ENCODE measurements at regions of chr2 and their contacts with region 1.

Region 1: DNA sequence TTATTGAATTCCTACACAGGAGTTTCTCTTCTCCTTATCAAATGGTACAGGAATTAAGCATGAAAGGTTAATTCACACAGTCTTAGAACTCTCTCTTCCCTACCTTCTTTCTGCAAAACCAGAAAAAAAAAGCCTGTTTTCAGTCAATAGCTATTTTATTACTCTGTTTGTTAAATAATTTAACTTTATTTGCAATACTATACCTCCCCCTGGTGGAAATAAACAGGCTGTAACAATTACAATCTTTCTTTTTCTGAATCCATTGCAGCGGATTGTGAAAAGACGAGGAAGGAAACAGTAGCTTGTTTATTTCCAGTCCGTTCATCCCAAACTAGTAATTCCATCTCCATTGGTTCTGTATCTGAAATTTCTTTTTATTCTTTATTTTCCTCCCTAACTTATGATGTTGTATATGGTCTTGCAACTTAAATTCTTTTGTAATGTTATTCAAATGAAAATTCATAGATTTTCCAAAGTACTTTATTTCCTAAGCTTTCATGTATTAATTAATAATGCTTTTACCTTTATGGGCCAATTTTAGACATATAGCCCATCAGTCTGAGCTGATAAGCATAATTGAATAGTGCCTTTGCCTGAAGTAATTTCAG is 165.2 kb downstream of the SH3BP4 start:
- DNase-seq: peak; percentile 32
- ATAC-seq: peak; percentile 63
- H3K4me3 ChIP-seq: no peak overlapping the region
- H3K27ac ChIP-seq: no peak overlapping the region
- H3K4me1 ChIP-seq: 0 out of 4 replicates have a peak, but pooled peaks cover 0 to 4% of the 10 kb centered on the region in 2 experiments
- H3K27me3 ChIP-seq: no peaks in the 10 kb centered on the region
- CTCF ChIP-seq: peak; percentile 35 to 82 (median 76); a peak in 5 of 6 replicates
- POLR2A ChIP-seq: no peak
- RAD21 ChIP-seq: peak; percentile 92

Region 2: DNA sequence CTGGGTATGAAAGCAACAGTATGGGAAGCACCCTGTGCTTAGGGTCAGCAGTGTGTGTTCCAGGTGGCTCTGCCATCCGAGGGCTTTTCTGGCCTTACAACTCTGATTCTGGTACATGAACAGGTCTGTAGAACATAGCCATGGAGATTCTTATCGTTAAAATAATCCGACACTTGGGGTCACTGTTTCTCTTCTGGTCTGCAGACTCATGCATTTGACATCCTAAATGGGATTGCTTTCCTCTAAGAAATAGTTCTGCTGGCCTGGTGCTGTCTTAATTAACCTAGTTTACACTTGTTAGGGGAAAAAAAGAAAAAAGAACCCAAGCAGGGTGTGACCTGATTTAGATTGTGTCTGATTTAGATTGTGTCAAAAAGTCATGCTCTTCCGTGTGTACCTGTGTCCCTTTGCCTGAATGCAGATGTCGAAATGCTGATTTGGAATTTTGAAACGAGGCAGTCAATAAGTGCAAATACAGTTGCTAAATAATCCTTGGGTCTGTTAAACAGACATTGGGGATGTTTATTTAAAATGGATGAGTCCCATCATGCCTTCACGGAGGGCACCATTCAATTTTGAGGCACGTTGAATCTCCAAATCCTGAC is 1140.2 kb before region 1 on chr2:
- CTCF ChIA-PET with region 1: interaction called, 6 read pairs
- POLR2A ChIA-PET with region 1: no interaction called
- RAD21 ChIA-PET with region 1: interaction called in 1 of 2 experiments, 3 read pairs
- intact Hi-C with region 1: loop called (anchors 2 kb)
- DNase-seq: peak; percentile 62
- ATAC-seq: peak; percentile 32; the same call in 1 of the 2 replicates
- H3K4me3 ChIP-seq: no peak overlapping the region
- H3K27ac ChIP-seq: no peak overlapping the region
- H3K4me1 ChIP-seq: peaks cover 31 to 64% of the 10 kb centered on the region in 2 experiments
- H3K27me3 ChIP-seq: no peaks in the 10 kb centered on the region
- CTCF ChIP-seq: peak; percentile 37 to 81 (median 65); a peak in 5 of 6 replicates
- POLR2A ChIP-seq: no peak
- RAD21 ChIP-seq: peak; percentile 97

Region 3: DNA sequence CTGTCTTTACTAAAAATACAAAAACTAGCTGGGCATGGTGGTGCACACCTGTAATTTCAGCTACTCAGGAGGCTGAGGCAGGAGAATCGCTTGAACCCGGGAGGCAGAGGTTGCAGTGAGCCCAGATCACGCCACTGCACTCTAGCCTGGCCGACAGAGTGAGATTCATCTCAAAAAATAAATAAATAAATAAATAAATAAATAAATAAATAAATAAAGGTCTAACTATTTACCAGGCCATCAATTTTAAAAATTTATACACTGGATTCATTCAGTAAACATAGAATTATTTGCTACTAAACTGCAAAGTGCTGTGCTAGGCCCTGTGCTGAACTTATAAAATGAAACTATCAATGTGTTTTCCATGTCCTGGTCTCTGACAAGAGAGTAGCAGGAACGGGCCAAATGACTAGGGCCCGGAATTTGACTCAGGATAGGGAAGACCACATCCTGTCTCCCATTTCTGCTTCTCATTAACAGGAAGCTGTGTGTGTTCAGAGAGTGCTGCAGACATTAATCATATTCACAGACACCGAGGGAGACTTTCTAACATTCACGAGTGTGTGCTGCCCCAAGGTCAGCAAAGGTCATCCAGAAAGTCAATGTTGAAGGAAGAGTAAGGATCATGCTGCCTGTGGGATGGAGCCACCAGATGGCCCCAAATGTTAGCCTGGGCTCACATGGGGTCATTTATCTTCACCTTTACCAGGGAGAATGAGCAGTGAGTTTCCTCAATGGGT is 970.7 kb before region 1 on chr2:
- CTCF ChIA-PET with region 1: no interaction called
- POLR2A ChIA-PET with region 1: no interaction called
- RAD21 ChIA-PET with region 1: no interaction called
- intact Hi-C with region 1: no loop called
- DNase-seq: no peak
- ATAC-seq: no peak
- H3K4me3 ChIP-seq: no peak overlapping the region
- H3K27ac ChIP-seq: no peak overlapping the region
- H3K4me1 ChIP-seq: peaks cover 14 to 24% of the 10 kb centered on the region in 2 experiments
- H3K27me3 ChIP-seq: no peaks in the 10 kb centered on the region
- CTCF ChIP-seq: 0 out of 6 replicates have a peak, but pooled peaks of 1 of the 3 experiments have one; percentile 19
- POLR2A ChIP-seq: no peak
- RAD21 ChIP-seq: peak; percentile 50

Region 4: DNA sequence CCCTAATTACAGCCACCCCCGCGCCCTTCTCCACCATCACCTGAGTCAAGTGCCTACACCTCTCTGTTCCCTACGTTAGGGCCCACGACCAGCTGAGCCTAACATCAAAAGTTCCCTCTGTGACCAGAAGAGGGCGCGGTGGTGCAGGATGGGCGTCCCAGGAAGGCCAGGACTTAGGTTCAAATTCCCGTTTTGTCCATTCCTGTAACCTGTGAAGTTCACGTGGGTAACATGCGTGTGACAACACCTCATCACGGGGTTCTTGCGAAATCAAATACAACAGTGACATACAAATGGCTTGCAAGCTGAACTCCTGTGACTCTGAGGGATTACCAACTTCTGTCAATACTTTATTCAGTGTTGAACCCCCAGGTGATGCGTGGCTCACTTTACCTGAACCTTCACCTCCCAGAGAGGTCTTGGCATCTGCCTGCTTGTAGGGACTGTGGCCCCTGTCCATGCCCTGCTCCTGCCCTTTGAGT is 828.0 kb before region 1 on chr2:
- CTCF ChIA-PET with region 1: interaction called, 6 read pairs
- POLR2A ChIA-PET with region 1: no interaction called
- RAD21 ChIA-PET with region 1: no interaction called
- intact Hi-C with region 1: loop called (anchors 10 kb)
- DNase-seq: peak; percentile 65
- ATAC-seq: peak; percentile 84
- H3K4me3 ChIP-seq: no peak overlapping the region
- H3K27ac ChIP-seq: no peak overlapping the region
- H3K4me1 ChIP-seq: peaks cover 19 to 55% of the 10 kb centered on the region in 2 experiments; a peak in 3 of 4 replicates
- H3K27me3 ChIP-seq: no peaks in the 10 kb centered on the region
- CTCF ChIP-seq: peak; percentile 67 to 89 (median 83); a peak in 5 of 6 replicates
- POLR2A ChIP-seq: no peak
- RAD21 ChIP-seq: peak; percentile 90

Region 5: DNA sequence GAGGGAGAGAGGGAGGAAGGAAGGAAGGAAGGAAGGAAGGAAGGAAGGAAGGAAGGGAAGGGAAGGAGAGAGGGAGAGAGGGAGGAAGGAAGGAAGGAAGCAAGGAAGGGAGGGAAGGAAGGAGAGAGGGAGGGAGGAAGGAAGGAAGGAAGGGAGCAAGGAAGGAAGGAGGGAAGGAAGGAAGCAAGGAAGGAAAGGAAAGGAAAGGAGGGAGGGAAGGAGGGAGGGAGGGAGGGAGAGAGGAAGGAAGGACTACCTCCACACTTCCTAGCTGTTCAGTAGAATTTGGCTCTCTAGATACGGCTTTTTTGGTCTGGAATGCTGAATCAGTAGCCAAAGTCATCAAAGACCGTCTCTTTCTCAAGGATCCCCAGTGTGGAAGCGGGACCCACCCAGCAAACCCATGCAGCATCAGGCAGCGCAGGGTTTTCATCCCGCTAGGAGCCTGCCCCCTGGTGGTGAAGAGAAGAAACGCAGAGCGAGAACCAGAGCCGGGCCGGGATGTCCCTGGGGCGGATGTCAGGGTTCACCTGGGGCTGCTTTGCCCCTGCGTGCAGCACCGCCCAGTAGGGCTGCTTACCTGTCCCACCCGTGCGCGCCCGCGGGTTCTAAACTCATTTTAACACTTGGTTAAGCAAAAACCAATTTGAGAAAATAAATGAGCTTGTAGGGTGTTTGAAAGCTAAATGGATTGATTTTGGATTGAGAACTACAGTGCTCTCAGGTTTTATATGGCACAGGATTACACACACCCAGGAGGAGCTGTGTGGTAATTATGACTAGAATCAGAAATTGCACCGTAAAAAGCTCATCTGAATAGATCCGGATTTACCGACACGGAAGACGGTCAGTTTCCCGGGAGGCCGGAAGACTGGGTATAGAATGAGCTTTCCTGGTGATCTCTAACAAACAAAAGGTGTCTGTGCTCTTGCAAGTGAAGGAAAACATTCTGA is 572.1 kb before region 1 on chr2:
- CTCF ChIA-PET with region 1: interaction called, 44 read pairs
- POLR2A ChIA-PET with region 1: interaction called, 6 read pairs
- RAD21 ChIA-PET with region 1: interaction called in 1 of 2 experiments, 6 read pairs
- intact Hi-C with region 1: loop called (anchors 1 kb)
- DNase-seq: peak; percentile 38
- ATAC-seq: peak; percentile 96
- H3K4me3 ChIP-seq: no peak overlapping the region
- H3K27ac ChIP-seq: no peak overlapping the region
- H3K4me1 ChIP-seq: peaks cover 3 to 8% of the 10 kb centered on the region in 2 experiments; a peak in 2 of 4 replicates
- H3K27me3 ChIP-seq: no peaks in the 10 kb centered on the region
- CTCF ChIP-seq: peak; percentile 84 to 85 (median 85)
- POLR2A ChIP-seq: no peak
- RAD21 ChIP-seq: peak; percentile 90

Region 6: GRCh38 chr2:234555720-234556119 is 561.3 kb before region 1 on chr2:
- CTCF ChIA-PET with region 1: interaction called, 17 read pairs
- POLR2A ChIA-PET with region 1: no interaction called
- RAD21 ChIA-PET with region 1: interaction called, 5 to 6 read pairs
- intact Hi-C with region 1: loop called (anchors 1 kb)
- DNase-seq: no peak
- ATAC-seq: no peak
- H3K4me3 ChIP-seq: no peak overlapping the region
- H3K27ac ChIP-seq: no peak overlapping the region
- H3K4me1 ChIP-seq: peaks cover 0 to 3% of the 10 kb centered on the region in 2 experiments; a peak in 1 of 4 replicates
- H3K27me3 ChIP-seq: no peaks in the 10 kb centered on the region
- CTCF ChIP-seq: no peak
- POLR2A ChIP-seq: no peak
- RAD21 ChIP-seq: no peak

Region 7: DNA sequence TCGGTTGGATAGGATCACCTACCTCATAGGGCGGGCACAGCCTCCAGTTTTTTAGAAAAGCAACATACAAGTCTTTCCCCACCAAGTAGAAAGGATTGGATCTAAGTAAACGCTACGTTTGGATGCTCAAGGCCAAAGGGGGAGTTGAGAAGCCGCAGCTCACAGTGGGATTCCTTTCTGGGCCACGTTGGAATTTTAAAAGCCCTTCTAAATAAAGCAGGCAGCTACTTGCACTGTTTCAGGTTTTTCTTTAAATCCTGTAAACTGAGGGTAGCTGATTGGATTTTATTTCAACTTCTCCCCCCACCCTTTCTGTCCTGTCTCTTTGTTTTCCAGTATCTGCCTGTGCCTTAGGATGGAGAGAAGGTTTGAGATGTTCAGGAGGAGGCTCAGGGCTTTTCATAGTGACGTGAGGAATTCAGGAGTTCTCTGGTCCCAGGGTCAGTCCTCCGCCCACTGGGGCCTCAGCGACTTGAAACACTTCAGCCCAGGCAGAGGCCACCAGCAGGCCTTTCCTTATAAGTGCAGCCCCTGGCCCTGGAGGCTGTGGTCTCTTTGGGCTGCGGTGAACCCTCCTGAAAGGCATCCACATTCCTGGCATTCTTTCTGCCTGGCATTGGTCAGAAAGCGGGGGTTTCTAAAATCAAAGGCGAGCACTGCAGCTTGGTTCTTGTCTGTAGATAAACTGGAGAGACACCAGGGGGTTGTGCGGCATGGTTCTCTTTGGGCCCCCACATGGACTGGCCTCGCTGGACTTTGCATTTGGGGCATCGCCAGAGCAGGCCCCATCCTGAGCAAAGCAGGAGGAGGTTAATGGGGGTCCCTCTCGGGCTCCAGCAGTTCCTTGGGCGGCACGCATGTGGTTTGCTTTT is 120.7 kb before region 1 on chr2:
- CTCF ChIA-PET with region 1: no interaction called
- POLR2A ChIA-PET with region 1: no interaction called
- RAD21 ChIA-PET with region 1: no interaction called
- intact Hi-C with region 1: no loop called
- DNase-seq: no peak
- ATAC-seq: peak; percentile 81
- H3K4me3 ChIP-seq: no peak overlapping the region
- H3K27ac ChIP-seq: peak overlapping the region; percentile 10; the same call in 1 of the 2 replicates
- H3K4me1 ChIP-seq: peaks cover 14 to 37% of the 10 kb centered on the region in 2 experiments
- H3K27me3 ChIP-seq: no peaks in the 10 kb centered on the region
- CTCF ChIP-seq: no peak
- POLR2A ChIP-seq: no peak
- RAD21 ChIP-seq: no peak

Region 8: DNA sequence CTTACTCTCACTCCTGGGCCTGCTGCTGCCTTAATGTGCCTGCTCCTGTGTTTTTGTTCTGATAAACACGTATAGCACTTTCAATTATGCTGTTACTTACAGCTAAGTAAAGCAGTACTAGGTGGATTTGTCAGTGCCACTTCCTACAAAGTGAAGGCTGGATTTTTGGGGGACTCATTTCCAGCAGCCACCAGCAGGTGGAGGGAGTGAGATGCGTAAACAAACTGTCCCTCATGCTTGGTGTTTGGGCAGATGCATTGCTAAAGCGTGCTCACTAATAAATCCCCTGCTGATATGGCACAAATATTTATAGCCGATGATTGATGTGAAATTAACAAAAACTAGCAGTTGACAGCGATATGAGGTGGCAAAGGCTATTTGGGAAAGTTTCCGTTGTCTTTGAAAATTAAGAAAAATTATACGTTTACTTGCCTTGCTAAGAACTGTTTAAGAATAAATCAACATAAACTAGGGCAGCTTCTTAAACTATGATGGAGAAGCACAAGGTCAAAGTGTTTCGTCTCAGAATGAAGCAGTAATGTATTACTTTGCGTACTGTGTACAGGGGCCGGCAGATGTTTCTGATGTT is 478.5 kb after region 1 on chr2:
- CTCF ChIA-PET with region 1: interaction called, 16 read pairs
- POLR2A ChIA-PET with region 1: no interaction called
- RAD21 ChIA-PET with region 1: interaction called in 1 of 2 experiments, 6 read pairs
- intact Hi-C with region 1: no loop called
- DNase-seq: peak; percentile 47
- ATAC-seq: peak; percentile 79
- H3K4me3 ChIP-seq: no peak overlapping the region
- H3K27ac ChIP-seq: no peak overlapping the region
- H3K4me1 ChIP-seq: no peaks in the 10 kb centered on the region; a peak in 2 of 4 replicates
- H3K27me3 ChIP-seq: no peaks in the 10 kb centered on the region
- CTCF ChIP-seq: peak; percentile 87 to 90 (median 89)
- POLR2A ChIP-seq: no peak
- RAD21 ChIP-seq: peak; percentile 85

Measured in HCT116 (cell line).